ENCODE measurements at regions of chr6 and their contacts with region 1.

Region 1: DNA sequence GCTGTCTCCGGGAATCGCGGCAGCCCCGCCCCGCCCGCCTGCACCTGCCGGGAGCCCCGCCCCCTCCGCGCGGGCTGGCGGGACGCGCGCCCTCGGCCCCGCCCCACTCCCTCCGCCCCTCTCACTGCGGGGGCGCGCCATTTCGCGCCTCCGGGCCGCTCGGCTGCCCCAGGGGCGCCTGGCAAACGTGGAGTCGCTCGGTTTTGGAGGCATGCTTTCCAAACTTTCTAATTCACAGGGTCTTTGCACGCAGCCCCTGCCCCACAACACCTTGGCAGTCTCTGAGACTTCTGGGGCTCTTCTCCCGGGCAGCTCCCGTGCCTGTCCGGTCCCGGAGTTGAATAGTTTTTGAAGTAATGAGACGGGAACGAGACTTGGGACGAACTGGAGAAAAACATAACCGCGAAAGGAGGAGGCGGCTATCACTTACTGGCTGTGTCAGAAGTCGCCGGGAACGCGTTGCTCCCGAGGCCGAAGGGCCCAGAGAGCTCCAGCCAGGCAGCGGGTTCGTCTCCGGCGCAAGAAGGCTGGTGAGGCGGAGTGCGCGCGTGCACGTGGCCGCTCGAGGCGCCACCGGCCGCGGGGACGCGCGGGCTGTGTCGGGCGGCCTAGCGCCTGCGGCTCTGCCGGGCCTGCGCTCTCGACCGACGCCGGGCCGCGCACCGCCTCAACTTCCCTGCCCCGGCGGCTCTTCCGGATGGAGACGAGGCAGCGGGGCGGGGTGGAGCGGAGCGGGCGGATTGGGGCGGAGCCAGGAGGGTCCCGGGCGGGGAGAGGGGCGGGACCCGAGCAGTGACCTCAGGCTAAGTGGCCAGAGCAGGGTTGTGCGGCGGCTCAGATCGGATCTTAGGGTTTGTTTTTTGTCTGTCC is at the start of gene MCM9:
- DNase-seq: peak; percentile 51 to 95 (median 88)

Region 2: GRCh38 chr6:118893807-118894424 is 40.8 kb before region 1 on chr6 and contains the start of gene ASF1A:
- intact Hi-C with region 1: loop called (anchors 2 kb)
- DNase-seq: peak; percentile 90 to 99 (median 98)

Measured in head of caudate nucleus (tissue), 42 donors.